ENCODE measurements at regions of chr7 and their contacts with region 1.

Region 1: GRCh38 chr7:44581879-44582603 is at the start of gene TMED4:
- DNase-seq: peak; percentile 100
- H3K4me3 ChIP-seq: peak within 1 kb of the TSS; percentile 59 to 81 (median 66)
- H3K27ac ChIP-seq: peak within 1 kb of the TSS; percentile 90 to 95 (median 92)
- H3K4me1 ChIP-seq: peaks cover 15 to 21% (median 19%) of the 10 kb centered on the region in 4 donors
- H3K27me3 ChIP-seq: no peaks in the 10 kb centered on the region
- CTCF ChIP-seq: no peak
- EP300 ChIP-seq: peak; percentile 30
- POLR2A ChIP-seq: peak; percentile 94
- total RNA-seq, gene TMED4: 226 to 303 (median 254) TPM

Region 2: GRCh38 chr7:43108255-43109011 is 1473.6 kb before region 1 on chr7:
- in situ Hi-C with region 1: no loop called
- intact Hi-C with region 1: no loop called
- DNase-seq: peak; percentile 53
- H3K4me3 ChIP-seq: no peak overlapping the region
- H3K27ac ChIP-seq: no peak overlapping the region
- H3K4me1 ChIP-seq: peaks cover 0 to 13% (median 11%) of the 10 kb centered on the region in 4 donors
- H3K27me3 ChIP-seq: peaks cover 50% of the 10 kb centered on the region
- CTCF ChIP-seq: peak; percentile 34 to 77 (median 65)
- EP300 ChIP-seq: no peak
- POLR2A ChIP-seq: no peak

Region 3: GRCh38 chr7:44604941-44605340 is 22.9 kb after region 1 on chr7:
- in situ Hi-C with region 1: no loop called
- intact Hi-C with region 1: loop called (anchors 1 kb)
- DNase-seq: no peak
- H3K4me3 ChIP-seq: no peak overlapping the region
- H3K27ac ChIP-seq: peak overlapping the region in 2 of 4 donors; percentile 95 to 98
- H3K4me1 ChIP-seq: peaks cover 4 to 32% (median 19%) of the 10 kb centered on the region in 4 donors
- H3K27me3 ChIP-seq: no peaks in the 10 kb centered on the region
- CTCF ChIP-seq: no peak
- EP300 ChIP-seq: no peak
- POLR2A ChIP-seq: no peak

Region 4: DNA sequence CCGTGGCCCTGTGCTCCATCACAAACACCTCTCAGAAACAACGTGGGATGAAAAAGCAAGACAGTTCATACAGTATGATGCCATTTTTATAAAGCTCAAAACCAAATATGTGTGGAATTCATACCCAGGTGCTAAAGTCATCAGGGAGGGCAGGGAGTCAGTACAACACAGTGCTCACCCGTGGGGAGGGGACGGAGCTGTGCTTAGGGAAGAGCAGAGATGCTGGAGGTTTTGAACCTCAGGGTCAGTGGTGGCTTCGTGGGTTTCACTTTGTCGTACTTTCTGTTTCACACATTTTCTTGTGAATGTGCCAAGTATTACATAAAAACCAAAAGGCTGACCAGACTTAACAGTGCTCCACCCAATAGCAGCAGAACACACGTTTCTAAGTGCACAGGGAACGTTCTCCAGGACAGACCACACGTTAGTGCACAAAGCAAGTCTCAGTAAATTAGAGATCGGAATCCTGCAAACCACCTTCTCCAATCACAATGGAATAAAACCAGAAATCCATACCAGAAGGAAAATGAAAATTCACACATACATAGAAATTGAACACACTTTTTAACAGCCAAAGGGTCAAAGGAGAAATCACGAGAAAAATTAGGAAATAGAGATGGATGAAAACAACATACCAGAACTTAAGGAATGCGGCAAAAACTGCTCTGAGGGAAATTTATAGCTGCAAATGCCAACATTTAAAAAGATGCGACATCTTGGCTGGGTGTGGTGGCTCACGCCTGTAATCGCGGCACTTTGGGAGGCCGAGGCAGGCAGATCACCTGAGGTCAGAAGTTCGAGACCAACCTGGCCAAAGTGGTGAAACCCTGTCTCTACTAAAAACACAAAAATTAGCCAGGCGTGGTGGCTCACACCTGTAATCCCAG is 188.0 kb after region 1 on chr7:
- in situ Hi-C with region 1: loop called in 2 of 4 experiments (anchors 25 kb)
- intact Hi-C with region 1: no loop called
- DNase-seq: peak; percentile 44
- H3K4me3 ChIP-seq: no peak overlapping the region
- H3K27ac ChIP-seq: peak overlapping the region; percentile 68 to 85 (median 78)
- H3K4me1 ChIP-seq: peaks cover 26 to 36% (median 34%) of the 10 kb centered on the region in 4 donors
- H3K27me3 ChIP-seq: no peaks in the 10 kb centered on the region
- CTCF ChIP-seq: no peak
- EP300 ChIP-seq: no peak
- POLR2A ChIP-seq: no peak

Region 5: GRCh38 chr7:44847508-44847920 is 265.5 kb after region 1 on chr7:
- in situ Hi-C with region 1: loop called in 3 of 4 experiments (anchors 10 to 25 kb)
- intact Hi-C with region 1: loop called (anchors 5 kb)
- DNase-seq: peak; percentile 91
- H3K4me3 ChIP-seq: peak overlapping the region; percentile 62 to 86 (median 71)
- H3K27ac ChIP-seq: peak overlapping the region; percentile 95 to 98 (median 96)
- H3K4me1 ChIP-seq: peaks cover 9 to 41% (median 22%) of the 10 kb centered on the region in 4 donors
- H3K27me3 ChIP-seq: no peaks in the 10 kb centered on the region
- CTCF ChIP-seq: peak; percentile 77 to 90 (median 87)
- EP300 ChIP-seq: no peak
- POLR2A ChIP-seq: peak; percentile 59

Region 6: GRCh38 chr7:44921607-44922359 is 339.7 kb after region 1 on chr7:
- in situ Hi-C with region 1: loop called in 1 of 4 experiments (anchors 25 kb)
- intact Hi-C with region 1: no loop called
- DNase-seq: peak; percentile 91
- H3K4me3 ChIP-seq: no peak overlapping the region
- H3K27ac ChIP-seq: no peak overlapping the region
- H3K4me1 ChIP-seq: peaks cover 0 to 3% (median 0%) of the 10 kb centered on the region in 4 donors
- H3K27me3 ChIP-seq: no peaks in the 10 kb centered on the region
- CTCF ChIP-seq: peak; percentile 82 to 92 (median 85)
- EP300 ChIP-seq: no peak
- POLR2A ChIP-seq: no peak

Region 7: GRCh38 chr7:45111298-45112223 is 529.5 kb after region 1 on chr7 and contains the start of gene TBRG4:
- in situ Hi-C with region 1: loop called in 3 of 4 experiments (anchors 25 kb)
- intact Hi-C with region 1: no loop called
- DNase-seq: peak; percentile 96
- H3K4me3 ChIP-seq: peak within 1 kb of the TSS; percentile 59 to 81 (median 74)
- H3K27ac ChIP-seq: peak within 1 kb of the TSS; percentile 93 to 96 (median 95)
- H3K4me1 ChIP-seq: peaks cover 10 to 45% (median 36%) of the 10 kb centered on the region in 4 donors
- H3K27me3 ChIP-seq: no peaks in the 10 kb centered on the region
- CTCF ChIP-seq: peak in 4 of 5 experiments; percentile 17 to 21 (median 18)
- EP300 ChIP-seq: no peak
- POLR2A ChIP-seq: peak; percentile 98
- total RNA-seq, gene TBRG4: 83.4 to 140 (median 105) TPM